T-cell (primary cell): ENCODE measurements at regions of chr17 and their contacts with region 1.

Region 1: GRCh38 chr17:75927286-75927922 is 13.4 kb downstream of the FBF1 start:
- DNase-seq: no peak
- ATAC-seq: no peak
- H3K4me3 ChIP-seq: no peak overlapping the region
- H3K4me3 Mint-ChIP-seq: no peak overlapping the region
- H3K27ac ChIP-seq: no peak overlapping the region
- H3K27ac Mint-ChIP-seq: no peak overlapping the region
- H3K4me1 ChIP-seq: no peaks in the 10 kb centered on the region
- H3K4me1 Mint-ChIP-seq: no peaks in the 10 kb centered on the region
- H3K27me3 ChIP-seq: no peaks in the 10 kb centered on the region
- H3K27me3 Mint-ChIP-seq: no peaks in the 10 kb centered on the region

Region 2: DNA sequence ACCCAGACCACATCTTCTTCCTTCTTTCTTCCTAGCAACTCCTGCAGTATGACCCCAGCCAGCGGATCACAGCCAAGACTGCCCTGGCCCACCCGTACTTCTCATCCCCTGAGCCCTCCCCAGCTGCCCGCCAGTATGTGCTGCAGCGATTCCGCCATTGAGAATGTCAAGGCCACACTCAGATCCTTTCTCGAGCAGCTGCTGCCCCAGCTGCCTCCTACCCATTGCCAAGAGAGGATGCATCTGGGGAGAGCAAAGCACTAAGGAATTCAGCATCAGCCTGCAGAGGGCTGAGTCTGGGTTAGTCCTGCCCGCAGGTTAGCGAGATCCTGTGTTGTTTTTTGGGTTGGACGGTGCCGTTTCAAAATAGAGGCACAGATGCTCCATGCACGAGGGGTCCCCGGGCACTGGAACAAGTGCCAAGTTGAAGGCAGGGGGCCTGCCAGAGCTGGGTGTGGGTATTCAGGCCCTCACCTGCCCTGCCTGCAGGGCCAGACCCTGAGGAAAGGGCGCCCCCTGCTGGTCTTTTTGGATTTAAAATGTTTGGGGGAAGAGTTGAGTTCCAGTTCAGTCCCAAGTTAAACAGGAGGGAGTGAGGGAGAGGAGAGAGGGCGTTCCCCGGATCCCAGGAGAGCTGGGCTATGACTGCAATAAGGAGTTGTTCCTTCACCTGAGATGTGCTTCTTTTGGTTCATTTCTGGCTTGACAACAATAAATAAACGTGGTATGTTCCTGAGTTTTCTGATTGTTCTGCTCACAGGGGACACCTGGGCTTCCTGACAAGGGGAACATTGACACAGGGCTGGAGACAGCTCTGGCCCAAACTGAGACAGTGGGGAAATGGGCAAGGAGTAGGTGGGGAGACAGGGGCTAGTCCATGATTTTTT is 78.1 kb after region 1 on chr17:
- CTCF ChIA-PET with region 1: interaction called in 1 of 2 experiments, 10 read pairs
- POLR2A ChIA-PET with region 1: no interaction called
- DNase-seq: peak; percentile 30 to 84 (median 70)
- ATAC-seq: peak; percentile 68 to 72 (median 71)
- H3K4me3 ChIP-seq: no peak overlapping the region
- H3K4me3 Mint-ChIP-seq: no peak overlapping the region
- H3K27ac ChIP-seq: no peak overlapping the region
- H3K27ac Mint-ChIP-seq: no peak overlapping the region
- H3K4me1 ChIP-seq: no peaks in the 10 kb centered on the region
- H3K4me1 Mint-ChIP-seq: peaks cover 2 to 10% (median 5%) of the 10 kb centered on the region in 3 donors
- H3K27me3 ChIP-seq: no peaks in the 10 kb centered on the region
- H3K27me3 Mint-ChIP-seq: no peaks in the 10 kb centered on the region